CD4-positive, alpha-beta memory T cell (primary cell): ENCODE measurements at regions of chr5 and their contacts with region 1.

Region 1: GRCh38 chr5:91383027-91383955 is at the start of gene ARRDC3:
- DNase-seq: peak; percentile 95 to 97 (median 96)
- H3K4me3 ChIP-seq: peak within 1 kb of the TSS; percentile 81 to 100
- H3K4me3 Mint-ChIP-seq: peak within 1 kb of the TSS; percentile 94 to 100 (median 99)
- H3K27ac ChIP-seq: peak within 1 kb of the TSS; percentile 100
- H3K27ac Mint-ChIP-seq: peak within 1 kb of the TSS; percentile 91 to 100 (median 99)
- H3K4me1 ChIP-seq: peaks cover 21% of the 10 kb centered on the region
- H3K4me1 Mint-ChIP-seq: peaks cover 22 to 34% (median 25%) of the 10 kb centered on the region in 4 donors
- H3K27me3 ChIP-seq: no peaks in the 10 kb centered on the region
- H3K27me3 Mint-ChIP-seq: no peaks in the 10 kb centered on the region
- total RNA-seq, gene ARRDC3: 123 to 130 TPM

Region 2: GRCh38 chr5:90474235-90475109 is 908.8 kb before region 1 on chr5 and contains the starts of genes MBLAC2 and POLR3G:
- CTCF ChIA-PET with region 1: no interaction called
- POLR2A ChIA-PET with region 1: interaction called, 15 read pairs
- intact Hi-C with region 1: loop called (anchors 1 kb)
- DNase-seq: peak; percentile 91 to 93 (median 92)
- H3K4me3 ChIP-seq: peak within 1 kb of the TSS; percentile 79 to 87
- H3K4me3 Mint-ChIP-seq: peak within 1 kb of the TSS; percentile 95 to 99 (median 99)
- H3K27ac ChIP-seq: peak within 1 kb of the TSS; percentile 66
- H3K27ac Mint-ChIP-seq: peak within 1 kb of the TSS; percentile 84 to 98 (median 95)
- H3K4me1 ChIP-seq: peaks cover 35% of the 10 kb centered on the region
- H3K4me1 Mint-ChIP-seq: peaks cover 24 to 46% (median 35%) of the 10 kb centered on the region in 4 donors
- H3K27me3 ChIP-seq: no peaks in the 10 kb centered on the region
- H3K27me3 Mint-ChIP-seq: no peaks in the 10 kb centered on the region
- total RNA-seq, gene MBLAC2: 14.7 to 16.1 TPM
- total RNA-seq, gene POLR3G: 1.2 to 1.5 TPM

Region 3: GRCh38 chr5:90932052-90932699 is 451.1 kb before region 1 on chr5:
- CTCF ChIA-PET with region 1: interaction called, 53 read pairs
- POLR2A ChIA-PET with region 1: no interaction called
- intact Hi-C with region 1: no loop called
- DNase-seq: peak in 4 of 5 donors; percentile 7 to 26 (median 21)
- H3K4me3 ChIP-seq: no peak overlapping the region
- H3K4me3 Mint-ChIP-seq: no peak overlapping the region
- H3K27ac ChIP-seq: no peak overlapping the region
- H3K27ac Mint-ChIP-seq: no peak overlapping the region
- H3K4me1 ChIP-seq: no peaks in the 10 kb centered on the region
- H3K4me1 Mint-ChIP-seq: peaks cover 0 to 3% (median 0%) of the 10 kb centered on the region in 4 donors
- H3K27me3 ChIP-seq: no peaks in the 10 kb centered on the region
- H3K27me3 Mint-ChIP-seq: peaks cover 6 to 7% of the 10 kb centered on the region in 2 donors

Region 4: GRCh38 chr5:91225848-91226686 is 157.2 kb before region 1 on chr5:
- CTCF ChIA-PET with region 1: interaction called, 285 read pairs
- POLR2A ChIA-PET with region 1: interaction called, 104 read pairs
- intact Hi-C with region 1: loop called (anchors 1 kb)
- DNase-seq: peak; percentile 52 to 58 (median 58)
- H3K4me3 ChIP-seq: no peak overlapping the region
- H3K4me3 Mint-ChIP-seq: peak overlapping the region in 1 of 8 donors; percentile 4
- H3K27ac ChIP-seq: no peak overlapping the region
- H3K27ac Mint-ChIP-seq: no peak overlapping the region
- H3K4me1 ChIP-seq: no peaks in the 10 kb centered on the region
- H3K4me1 Mint-ChIP-seq: no peaks in the 10 kb centered on the region
- H3K27me3 ChIP-seq: no peaks in the 10 kb centered on the region
- H3K27me3 Mint-ChIP-seq: peaks cover 0 to 6% of the 10 kb centered on the region in 2 donors

Region 5: DNA sequence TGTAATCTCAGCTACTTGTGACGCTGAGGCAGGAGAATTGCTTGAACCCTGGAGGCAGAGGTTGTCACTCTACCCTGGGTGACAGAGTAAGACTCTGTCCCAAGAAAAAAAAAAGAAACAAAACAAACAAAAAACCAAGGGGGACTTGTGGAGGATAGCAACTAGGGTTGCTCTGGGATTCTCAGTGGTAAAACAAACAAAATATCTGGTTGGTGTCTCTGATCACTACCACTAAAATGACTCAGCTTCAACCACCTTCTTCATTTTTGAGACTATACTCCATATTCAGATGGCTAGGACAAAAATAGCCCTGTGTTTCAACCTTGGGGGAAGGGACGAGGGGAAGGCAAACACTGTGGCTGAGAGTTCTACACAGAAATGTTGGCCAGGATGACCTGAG is 110.4 kb before region 1 on chr5:
- CTCF ChIA-PET with region 1: interaction called, 15 read pairs
- POLR2A ChIA-PET with region 1: interaction called, 23 read pairs
- intact Hi-C with region 1: no loop called
- DNase-seq: no peak
- H3K4me3 ChIP-seq: no peak overlapping the region
- H3K4me3 Mint-ChIP-seq: no peak overlapping the region
- H3K27ac ChIP-seq: no peak overlapping the region
- H3K27ac Mint-ChIP-seq: no peak overlapping the region
- H3K4me1 ChIP-seq: peaks cover 8% of the 10 kb centered on the region
- H3K4me1 Mint-ChIP-seq: peaks cover 4 to 16% (median 8%) of the 10 kb centered on the region in 4 donors
- H3K27me3 ChIP-seq: no peaks in the 10 kb centered on the region
- H3K27me3 Mint-ChIP-seq: no peaks in the 10 kb centered on the region

Region 6: GRCh38 chr5:91366571-91366970 is 16.7 kb before region 1 on chr5:
- CTCF ChIA-PET with region 1: interaction called, 8 read pairs
- POLR2A ChIA-PET with region 1: interaction called, 94 read pairs
- intact Hi-C with region 1: loop called (anchors 1 kb)
- DNase-seq: no peak
- H3K4me3 ChIP-seq: no peak overlapping the region
- H3K4me3 Mint-ChIP-seq: no peak overlapping the region
- H3K27ac ChIP-seq: no peak overlapping the region
- H3K27ac Mint-ChIP-seq: no peak overlapping the region
- H3K4me1 ChIP-seq: no peaks in the 10 kb centered on the region
- H3K4me1 Mint-ChIP-seq: peaks cover 9 to 21% (median 14%) of the 10 kb centered on the region in 4 donors
- H3K27me3 ChIP-seq: no peaks in the 10 kb centered on the region
- H3K27me3 Mint-ChIP-seq: no peaks in the 10 kb centered on the region